ENCODE measurements at regions of chr3 and their contacts with region 1.

Region 1: DNA sequence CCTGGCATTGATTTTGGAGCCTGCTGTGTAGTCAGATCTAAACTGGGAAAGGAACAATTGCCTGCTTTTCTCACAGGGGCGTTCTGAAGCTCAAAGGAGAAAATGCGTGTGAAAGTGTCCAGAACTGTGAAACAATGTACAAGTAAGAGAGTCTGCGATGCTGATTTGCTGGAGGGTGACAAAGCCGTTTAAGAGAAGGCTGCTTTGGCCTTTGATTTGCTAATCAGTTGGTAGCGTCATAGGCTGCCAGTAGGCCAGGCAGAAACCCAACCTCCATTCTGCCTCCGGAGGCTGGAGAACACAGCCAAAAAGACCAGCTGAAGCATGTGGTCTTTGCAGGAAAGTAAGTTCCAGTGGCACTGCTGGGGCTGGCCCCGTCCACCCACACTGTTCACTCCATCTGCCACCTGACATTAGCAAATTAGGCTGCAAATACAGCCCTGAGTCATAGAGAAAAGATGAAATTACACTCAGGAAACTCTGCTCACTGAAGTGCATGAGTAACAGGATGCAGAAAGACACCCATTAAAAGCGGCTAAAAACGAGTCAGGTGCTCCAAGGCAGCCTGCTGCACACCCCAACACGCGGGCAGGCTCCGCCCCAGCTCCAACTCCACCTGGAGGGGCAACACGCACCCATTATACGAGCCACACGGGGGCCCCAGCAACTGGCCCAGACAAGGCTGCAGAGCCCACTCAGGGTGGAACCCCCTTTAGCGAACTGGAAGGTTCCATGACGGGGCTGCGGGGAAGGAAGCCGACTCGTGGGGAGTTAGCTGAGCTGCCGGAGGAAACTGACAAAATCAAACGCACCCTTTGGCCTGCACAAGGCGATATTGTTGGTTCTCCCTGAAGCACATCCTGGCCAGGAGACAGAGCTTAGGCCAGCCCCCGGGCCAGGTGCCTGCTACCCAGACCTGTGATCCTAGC is 31.6 kb downstream of the ZDHHC19 start:
- DNase-seq: peak; percentile 98
- ATAC-seq: peak; percentile 81
- H3K4me3 ChIP-seq: peak overlapping the region; percentile 50; the same call in 1 of the 2 replicates
- H3K27ac ChIP-seq: peak overlapping the region; percentile 93
- H3K4me1 ChIP-seq: peaks cover 55% of the 10 kb centered on the region
- H3K27me3 ChIP-seq: no peaks in the 10 kb centered on the region
- CTCF ChIP-seq: peak; percentile 45 to 66 (median 48)
- EP300 ChIP-seq: peak; percentile 71 to 88
- POLR2A ChIP-seq: peak; percentile 75
- RAD21 ChIP-seq: peak; percentile 70

Region 2: GRCh38 chr3:196012481-196012880 is 167.2 kb before region 1 on chr3:
- CTCF ChIA-PET with region 1: no interaction called
- POLR2A ChIA-PET with region 1: no interaction called
- RAD21 ChIA-PET with region 1: no interaction called
- SMC1A ChIA-PET with region 1: no interaction called
- in situ Hi-C with region 1: no loop called
- intact Hi-C with region 1: no loop called
- DNase-seq: no peak
- ATAC-seq: no peak
- H3K4me3 ChIP-seq: no peak overlapping the region
- H3K27ac ChIP-seq: no peak overlapping the region
- H3K4me1 ChIP-seq: no peaks in the 10 kb centered on the region
- H3K27me3 ChIP-seq: no peaks in the 10 kb centered on the region
- CTCF ChIP-seq: no peak
- EP300 ChIP-seq: no peak
- POLR2A ChIP-seq: no peak
- RAD21 ChIP-seq: no peak

Region 3: DNA sequence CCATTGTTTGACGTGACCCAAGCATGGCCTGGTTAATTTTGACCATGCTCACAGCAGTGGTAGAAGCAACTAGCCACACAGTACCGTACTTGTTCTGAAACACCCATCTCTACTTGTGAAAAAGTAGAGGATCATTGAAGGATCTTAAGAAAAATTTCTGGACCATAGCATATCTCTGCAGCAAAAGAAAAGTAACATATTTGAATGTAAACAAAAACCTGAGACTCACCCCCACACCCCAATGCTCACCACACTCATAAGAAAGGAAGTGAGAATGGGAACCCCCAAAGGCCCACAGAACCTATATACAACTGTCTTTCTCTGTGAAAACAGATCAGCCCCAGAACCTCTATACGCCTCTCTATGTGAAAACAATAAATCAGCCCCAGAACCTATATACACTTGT is 64.0 kb before region 1 on chr3:
- CTCF ChIA-PET with region 1: interaction called, 18 read pairs
- POLR2A ChIA-PET with region 1: interaction called, 33 read pairs
- RAD21 ChIA-PET with region 1: interaction called, 57 read pairs
- SMC1A ChIA-PET with region 1: interaction called, 39 read pairs
- in situ Hi-C with region 1: no loop called
- intact Hi-C with region 1: loop called (anchors 1 kb)
- DNase-seq: peak; percentile 80
- ATAC-seq: peak; percentile 75
- H3K4me3 ChIP-seq: peak overlapping the region; percentile 37; the same call in 1 of the 2 replicates
- H3K27ac ChIP-seq: peak overlapping the region; percentile 86
- H3K4me1 ChIP-seq: peaks cover 69% of the 10 kb centered on the region
- H3K27me3 ChIP-seq: no peaks in the 10 kb centered on the region
- CTCF ChIP-seq: no peak
- EP300 ChIP-seq: peak; percentile 72 to 82; a peak in 3 of 4 replicates
- POLR2A ChIP-seq: no peak
- RAD21 ChIP-seq: 0 out of 2 replicates have a peak, but pooled peaks have one; percentile 19

Region 4: DNA sequence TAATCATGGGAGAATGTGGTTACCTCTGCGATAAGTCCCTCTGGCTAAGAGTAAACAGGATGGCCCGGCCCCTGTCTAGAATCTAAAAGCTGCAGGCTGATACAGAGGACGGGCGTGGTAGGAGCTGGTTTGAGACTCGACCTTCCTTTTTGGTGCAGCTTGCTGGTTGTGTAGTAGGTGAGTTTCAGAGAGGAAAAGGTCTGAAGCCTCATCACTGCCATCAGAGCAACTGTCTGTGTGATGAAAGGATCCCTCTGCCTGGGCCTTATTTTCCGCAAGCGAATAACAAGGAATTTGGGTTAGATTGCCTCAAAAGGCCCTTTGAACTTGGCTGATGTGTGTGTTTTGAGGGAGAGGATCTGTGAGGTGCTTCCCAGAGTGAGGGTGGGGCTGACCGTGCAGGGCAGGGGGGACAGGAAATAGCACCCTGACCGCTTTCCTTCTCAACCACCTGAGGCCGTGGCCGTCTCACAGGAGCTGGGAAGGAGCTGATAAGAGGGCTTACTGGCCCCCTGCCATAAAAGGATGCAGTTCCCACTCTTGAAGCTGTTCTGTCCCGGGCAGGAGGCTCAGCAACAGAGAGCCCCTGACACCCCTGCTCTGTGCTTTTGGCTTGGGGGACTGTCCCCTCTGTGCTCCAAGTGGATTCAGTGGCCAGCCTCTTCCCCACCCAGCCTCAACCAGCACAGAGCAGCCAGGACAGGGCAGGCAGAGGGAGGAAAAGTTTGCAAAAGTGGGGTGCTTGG is 52.2 kb before region 1 on chr3:
- CTCF ChIA-PET with region 1: interaction called, 5 read pairs
- POLR2A ChIA-PET with region 1: interaction called, 6 read pairs
- RAD21 ChIA-PET with region 1: interaction called, 3 read pairs
- SMC1A ChIA-PET with region 1: interaction called, 11 read pairs
- in situ Hi-C with region 1: no loop called
- intact Hi-C with region 1: no loop called
- DNase-seq: no peak
- ATAC-seq: peak; percentile 80
- H3K4me3 ChIP-seq: no peak overlapping the region
- H3K27ac ChIP-seq: peak overlapping the region; percentile 27
- H3K4me1 ChIP-seq: peaks cover 25% of the 10 kb centered on the region
- H3K27me3 ChIP-seq: no peaks in the 10 kb centered on the region
- CTCF ChIP-seq: no peak
- EP300 ChIP-seq: no peak
- POLR2A ChIP-seq: no peak
- RAD21 ChIP-seq: no peak

Region 5: DNA sequence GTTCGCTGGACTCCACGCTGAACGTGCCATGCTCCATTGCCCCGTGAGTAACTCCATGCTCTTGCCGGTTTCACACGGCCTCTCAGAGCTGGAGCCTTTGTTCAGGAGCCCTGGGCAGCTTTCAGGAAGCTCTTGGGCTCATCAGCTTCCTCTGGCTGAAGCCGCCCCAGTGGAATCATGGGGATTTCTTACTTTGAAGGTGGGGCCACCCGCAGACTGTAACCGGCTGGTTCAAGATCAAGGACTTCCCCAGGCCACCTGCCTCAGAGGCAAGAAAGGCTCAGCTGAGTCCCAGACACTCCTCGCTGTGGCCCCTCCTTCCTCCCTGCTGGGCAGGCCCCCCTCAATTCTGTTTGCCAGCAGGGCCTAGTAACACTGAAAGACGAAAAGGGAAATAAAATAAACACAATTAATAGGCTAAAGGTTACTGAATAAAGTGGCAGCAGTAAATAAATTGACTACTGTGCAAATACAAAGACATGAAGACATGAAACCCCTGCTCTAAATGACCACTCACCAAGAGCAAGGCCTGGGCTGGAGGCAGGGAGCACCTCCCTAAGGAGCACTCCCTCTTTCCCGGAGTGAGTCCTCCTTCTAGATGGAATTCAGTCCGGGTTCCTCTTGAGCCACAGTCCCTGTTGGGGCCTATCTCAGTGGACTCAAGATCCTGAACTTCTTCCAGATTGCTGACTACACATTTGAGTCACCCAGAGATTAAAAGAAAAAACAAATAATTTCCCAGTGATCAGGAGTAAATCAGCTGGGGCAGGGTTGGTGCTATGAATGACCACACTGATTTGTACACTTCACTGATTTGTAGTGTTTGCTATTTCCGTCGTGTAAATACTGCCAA is 19.5 kb before region 1 on chr3:
- CTCF ChIA-PET with region 1: interaction called, 8 read pairs
- POLR2A ChIA-PET with region 1: interaction called, 24 read pairs
- RAD21 ChIA-PET with region 1: interaction called, 54 read pairs
- SMC1A ChIA-PET with region 1: interaction called, 40 read pairs
- in situ Hi-C with region 1: no loop called
- intact Hi-C with region 1: loop called (anchors 2 kb)
- DNase-seq: peak; percentile 72
- ATAC-seq: peak; percentile 100
- H3K4me3 ChIP-seq: peak overlapping the region; percentile 14; the same call in 1 of the 2 replicates
- H3K27ac ChIP-seq: peak overlapping the region; percentile 66
- H3K4me1 ChIP-seq: peaks cover 12% of the 10 kb centered on the region
- H3K27me3 ChIP-seq: no peaks in the 10 kb centered on the region
- CTCF ChIP-seq: no peak
- EP300 ChIP-seq: 0 out of 4 replicates have a peak, but pooled peaks of 1 of the 2 experiments have one; percentile 10
- POLR2A ChIP-seq: peak; percentile 74
- RAD21 ChIP-seq: no peak

Region 6: DNA sequence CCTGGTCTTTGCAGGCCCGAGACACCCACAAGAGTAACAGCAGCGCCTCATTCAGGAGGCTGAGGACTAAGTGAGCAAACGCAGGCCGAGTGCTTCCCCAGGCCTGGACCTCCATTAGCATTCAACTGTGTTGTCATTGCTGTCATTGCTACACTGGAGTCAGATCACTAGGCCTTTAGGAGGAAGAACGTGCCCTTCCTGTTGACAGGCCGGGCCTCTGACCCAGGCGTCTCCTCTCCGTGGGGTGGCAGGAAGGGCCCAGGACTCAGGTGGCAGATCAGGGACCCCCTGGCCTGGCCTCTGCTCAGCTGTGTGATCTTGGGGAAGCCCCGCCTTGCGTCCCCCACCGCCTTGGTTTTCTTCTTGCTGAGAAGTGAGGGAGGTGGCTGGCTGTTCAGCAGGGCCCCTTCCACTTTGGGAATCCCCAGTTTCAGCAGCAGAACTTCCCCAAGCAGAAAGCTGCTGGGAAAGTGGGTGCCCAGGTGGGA is 12.4 kb after region 1 on chr3:
- CTCF ChIA-PET with region 1: interaction called, 64 read pairs
- POLR2A ChIA-PET with region 1: interaction called, 61 read pairs
- RAD21 ChIA-PET with region 1: interaction called, 58 read pairs
- SMC1A ChIA-PET with region 1: interaction called, 77 read pairs
- in situ Hi-C with region 1: no loop called
- intact Hi-C with region 1: loop called (anchors 1 kb)
- DNase-seq: peak; percentile 74
- ATAC-seq: peak; percentile 77
- H3K4me3 ChIP-seq: peak overlapping the region; percentile 53; the same call in 1 of the 2 replicates
- H3K27ac ChIP-seq: peak overlapping the region; percentile 83
- H3K4me1 ChIP-seq: peaks cover 55% of the 10 kb centered on the region
- H3K27me3 ChIP-seq: no peaks in the 10 kb centered on the region
- CTCF ChIP-seq: peak in 1 of 3 experiments; percentile 5; a peak in 1 of 6 replicates
- EP300 ChIP-seq: peak; percentile 34 to 53; a peak in 3 of 4 replicates
- POLR2A ChIP-seq: peak; percentile 62
- RAD21 ChIP-seq: peak; percentile 42; the same call in 1 of the 2 replicates

Region 7: DNA sequence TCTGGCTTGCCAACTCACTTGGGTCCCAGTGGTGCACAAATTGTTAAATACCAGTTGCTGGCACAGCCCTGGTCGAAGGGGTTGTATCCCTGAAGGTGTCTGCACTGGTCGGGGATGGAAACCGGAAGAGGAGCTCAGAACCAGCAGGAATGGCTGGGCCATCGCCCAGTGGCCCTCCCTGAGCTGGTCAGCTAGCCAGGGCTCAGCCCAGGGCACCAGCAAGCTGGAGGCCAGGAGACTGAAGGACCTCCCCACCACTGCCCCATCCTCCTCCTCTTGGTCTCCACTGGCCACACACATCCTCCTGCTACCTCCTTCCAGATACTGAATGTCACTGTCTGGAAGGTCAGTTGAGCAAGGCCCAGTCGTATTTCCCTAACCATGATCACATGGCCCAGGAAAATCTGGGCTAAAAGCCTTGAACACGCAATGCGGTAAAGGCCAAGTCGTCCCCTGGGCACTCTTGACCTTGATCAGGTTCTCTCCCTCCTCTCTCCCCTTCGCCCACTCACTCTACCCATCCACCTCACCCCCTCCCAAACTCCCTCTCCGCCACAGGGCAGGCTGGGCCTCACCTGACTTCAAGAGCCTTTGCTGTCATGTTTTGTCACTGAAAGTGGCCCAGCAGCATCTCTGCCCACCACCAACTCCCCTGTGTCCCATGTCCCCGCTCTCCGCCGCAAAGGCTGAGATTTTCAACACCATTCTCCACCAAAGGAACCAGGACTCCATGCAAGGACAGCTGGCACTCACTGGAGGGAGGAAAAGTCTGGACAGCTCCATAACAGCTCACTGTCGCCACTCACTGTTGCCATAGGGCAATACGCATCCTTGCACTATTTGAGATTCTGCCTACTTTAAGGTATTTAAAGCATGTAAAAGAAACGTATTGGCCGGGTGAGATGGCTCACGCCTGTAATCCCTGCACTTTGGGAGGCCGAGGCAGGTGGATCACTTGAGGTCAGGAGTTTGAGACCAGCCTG is 19.4 kb after region 1 on chr3:
- CTCF ChIA-PET with region 1: interaction called, 64 read pairs
- POLR2A ChIA-PET with region 1: interaction called, 61 read pairs
- RAD21 ChIA-PET with region 1: interaction called, 58 read pairs
- SMC1A ChIA-PET with region 1: interaction called, 77 read pairs
- in situ Hi-C with region 1: no loop called
- intact Hi-C with region 1: no loop called
- DNase-seq: no peak
- ATAC-seq: no peak
- H3K4me3 ChIP-seq: no peak overlapping the region
- H3K27ac ChIP-seq: no peak overlapping the region
- H3K4me1 ChIP-seq: peaks cover 21% of the 10 kb centered on the region
- H3K27me3 ChIP-seq: no peaks in the 10 kb centered on the region
- CTCF ChIP-seq: peak in 2 of 3 experiments; percentile 18 to 25; a peak in 3 of 6 replicates
- EP300 ChIP-seq: no peak
- POLR2A ChIP-seq: no peak
- RAD21 ChIP-seq: peak; percentile 28; the same call in 1 of the 2 replicates

Measured in GM12878 (cell line).